Ascending aorta (tissue), 2 donors: ENCODE measurements at regions of chr13 and their contacts with region 1.

Region 1: DNA sequence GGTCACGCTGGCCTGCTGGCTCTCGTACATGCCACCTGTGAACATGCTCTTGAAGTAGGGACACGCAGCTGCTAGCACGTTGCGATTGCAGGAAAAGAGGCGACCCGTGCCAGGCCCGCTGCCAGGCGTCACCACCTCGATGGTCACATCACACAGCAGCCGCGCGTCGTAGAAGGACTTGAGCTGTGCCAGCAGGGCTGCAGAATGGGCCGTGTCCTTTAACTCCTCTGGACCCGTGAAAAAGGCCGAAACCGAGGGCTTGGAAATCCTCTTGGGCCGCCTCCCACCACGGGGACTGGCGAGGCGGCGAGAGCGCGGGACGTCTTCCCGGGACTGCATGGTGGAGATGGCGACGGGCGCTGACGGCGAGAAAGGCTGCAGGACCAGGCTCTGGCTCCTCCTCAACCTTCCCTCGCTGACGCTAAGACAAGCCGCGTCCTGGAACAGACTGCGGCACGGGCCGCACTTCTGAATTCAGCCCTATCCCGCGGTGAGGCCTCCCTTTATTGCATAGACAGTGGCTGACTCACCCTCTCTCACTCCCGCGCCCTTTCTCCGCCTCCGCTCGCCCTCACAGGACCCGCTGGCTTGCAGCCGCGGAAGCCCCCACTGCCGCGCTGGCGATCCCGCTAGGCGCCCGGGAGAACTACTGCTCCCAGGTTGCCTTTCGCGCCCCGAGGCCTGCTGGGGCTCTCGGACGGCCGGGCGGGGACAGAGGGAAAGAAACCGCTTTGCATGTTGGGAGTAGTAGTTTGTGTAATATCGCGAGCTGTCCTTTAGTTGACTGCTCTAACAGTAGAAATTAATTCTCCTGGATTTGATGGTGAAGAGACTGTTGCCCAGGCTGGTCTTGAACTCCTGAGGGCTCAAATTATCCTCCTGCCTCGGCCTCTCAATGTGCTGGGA is at the start of gene KBTBD7:
- DNase-seq: peak; percentile 76 to 97
- H3K4me3 ChIP-seq: peak within 1 kb of the TSS; percentile 70 to 94
- H3K27ac ChIP-seq: peak within 1 kb of the TSS; percentile 78 to 86
- H3K4me1 ChIP-seq: peaks cover 0 to 8% of the 10 kb centered on the region in 2 donors
- H3K27me3 ChIP-seq: no peaks in the 10 kb centered on the region
- CTCF ChIP-seq: peak in 2 of 3 experiments; percentile 5 to 11
- total RNA-seq, gene KBTBD7: 2.1 TPM

Region 2: DNA sequence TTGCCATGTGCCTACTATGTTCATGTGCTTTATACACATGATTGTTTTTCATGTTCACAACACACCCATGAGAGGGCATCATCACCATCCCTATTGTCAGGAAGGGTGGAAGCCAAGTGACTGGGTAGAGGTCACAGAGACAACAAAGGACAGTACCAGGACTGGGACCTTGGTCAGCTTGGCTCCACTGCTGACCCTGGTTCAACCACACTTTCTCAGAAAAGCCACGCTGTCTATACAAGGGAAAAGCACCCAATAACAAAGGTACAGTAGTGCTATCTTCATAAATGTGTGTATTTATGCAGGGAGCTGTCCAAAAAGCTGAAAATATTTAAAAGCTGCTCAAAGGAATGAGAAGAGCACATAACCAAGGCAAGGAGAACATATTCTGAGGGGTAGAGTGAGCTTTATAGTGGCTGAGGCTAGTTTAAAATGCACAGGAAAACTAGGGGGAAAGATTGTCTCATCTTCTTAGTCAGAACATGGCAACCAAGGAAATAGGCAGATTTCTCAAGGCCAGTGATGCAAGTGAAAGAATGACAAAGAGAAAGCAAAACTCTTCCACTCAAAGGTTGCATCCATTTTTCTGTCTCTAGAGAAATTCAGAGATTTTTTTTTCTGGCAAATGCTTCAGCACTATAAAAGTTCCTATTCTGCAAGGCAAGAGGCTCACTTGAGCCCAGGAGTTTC is 942.7 kb before region 1 on chr13:
- intact Hi-C with region 1: no loop called
- DNase-seq: no peak
- H3K4me3 ChIP-seq: no peak overlapping the region
- H3K27ac ChIP-seq: peak overlapping the region in 1 of 2 donors; percentile 70
- H3K4me1 ChIP-seq: peaks cover 0 to 13% of the 10 kb centered on the region in 2 donors
- H3K27me3 ChIP-seq: no peaks in the 10 kb centered on the region
- CTCF ChIP-seq: no peak

Region 3: GRCh38 chr13:40922437-40923040 is 271.6 kb before region 1 on chr13:
- intact Hi-C with region 1: loop called (anchors 5 kb)
- DNase-seq: no peak
- H3K4me3 ChIP-seq: no peak overlapping the region
- H3K27ac ChIP-seq: no peak overlapping the region
- H3K4me1 ChIP-seq: peaks cover 0 to 6% of the 10 kb centered on the region in 2 donors
- H3K27me3 ChIP-seq: no peaks in the 10 kb centered on the region
- CTCF ChIP-seq: no peak

Region 4: GRCh38 chr13:41132512-41133152 is 61.5 kb before region 1 on chr13 and contains the start of gene KBTBD6:
- intact Hi-C with region 1: loop called (anchors 1 kb)
- DNase-seq: peak; percentile 92 to 98
- H3K4me3 ChIP-seq: peak within 1 kb of the TSS; percentile 77 to 83
- H3K27ac ChIP-seq: peak within 1 kb of the TSS; percentile 76 to 77
- H3K4me1 ChIP-seq: peaks cover 0 to 10% of the 10 kb centered on the region in 2 donors
- H3K27me3 ChIP-seq: no peaks in the 10 kb centered on the region
- CTCF ChIP-seq: no peak
- total RNA-seq, gene KBTBD6: 2.0 TPM